ENCODE measurements at regions of chr2 and their contacts with region 1.

Region 1: GRCh38 chr2:66445925-66446860 is 11.3 kb downstream of the MEIS1 start:
- DNase-seq: peak; percentile 61 to 73 (median 70)
- ATAC-seq: peak; percentile 54
- H3K4me3 ChIP-seq: peak overlapping the region; percentile 49 to 55
- H3K27ac ChIP-seq: peak overlapping the region; percentile 87 to 98 (median 92)
- H3K4me1 ChIP-seq: peaks cover 35% of the 10 kb centered on the region
- H3K27me3 ChIP-seq: no peaks in the 10 kb centered on the region
- CTCF ChIP-seq: peak in 1 of 7 experiments; percentile 5
- POLR2A ChIP-seq: peak in 2 of 3 donors; percentile 45 to 56

Region 2: GRCh38 chr2:66495788-66496640 is 49.8 kb after region 1 on chr2:
- intact Hi-C with region 1: loop called (anchors 10 kb)
- DNase-seq: peak; percentile 57 to 75 (median 70)
- ATAC-seq: peak; percentile 69
- H3K4me3 ChIP-seq: no peak overlapping the region
- H3K27ac ChIP-seq: peak overlapping the region; percentile 68 to 81 (median 78)
- H3K4me1 ChIP-seq: peaks cover 84% of the 10 kb centered on the region
- H3K27me3 ChIP-seq: no peaks in the 10 kb centered on the region
- CTCF ChIP-seq: peak in 4 of 7 experiments; percentile 34 to 40 (median 35)
- POLR2A ChIP-seq: no peak

Region 3: DNA sequence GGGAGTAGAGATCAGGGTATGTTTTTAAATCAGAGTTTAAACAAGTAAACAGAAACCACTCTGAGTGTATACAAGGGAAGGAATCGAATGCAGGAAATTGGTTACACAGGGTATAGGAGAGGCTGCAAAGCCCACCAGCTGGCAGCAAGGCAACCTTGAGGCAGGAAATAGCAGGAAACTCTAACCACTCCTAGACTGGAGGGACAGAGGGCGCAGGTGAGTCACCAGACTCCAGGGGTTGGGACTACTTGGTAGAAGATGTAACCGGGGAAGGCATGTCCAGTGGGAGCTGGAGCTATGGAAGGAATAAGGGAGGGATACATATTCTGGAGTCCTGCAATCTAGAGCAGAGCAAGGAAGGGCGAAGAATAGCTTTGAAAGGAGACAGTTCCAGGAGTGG is 141.0 kb after region 1 on chr2:
- intact Hi-C with region 1: no loop called
- DNase-seq: peak; percentile 63 to 73 (median 72)
- ATAC-seq: peak; percentile 43
- H3K4me3 ChIP-seq: no peak overlapping the region
- H3K27ac ChIP-seq: peak overlapping the region in 1 of 4 donors; percentile 18
- H3K4me1 ChIP-seq: peaks cover 38% of the 10 kb centered on the region
- H3K27me3 ChIP-seq: no peaks in the 10 kb centered on the region
- CTCF ChIP-seq: peak in 6 of 7 experiments; percentile 10 to 55 (median 38)
- POLR2A ChIP-seq: no peak

Region 4: GRCh38 chr2:66915237-66915636 is 469.0 kb after region 1 on chr2:
- intact Hi-C with region 1: no loop called
- DNase-seq: no peak
- ATAC-seq: no peak
- H3K4me3 ChIP-seq: no peak overlapping the region
- H3K27ac ChIP-seq: no peak overlapping the region
- H3K4me1 ChIP-seq: peaks cover 12% of the 10 kb centered on the region
- H3K27me3 ChIP-seq: no peaks in the 10 kb centered on the region
- CTCF ChIP-seq: no peak
- POLR2A ChIP-seq: no peak